Endothelial cell of umbilical vein (primary cell): ENCODE measurements at regions of chr19 and their contacts with region 1.

Region 1: DNA sequence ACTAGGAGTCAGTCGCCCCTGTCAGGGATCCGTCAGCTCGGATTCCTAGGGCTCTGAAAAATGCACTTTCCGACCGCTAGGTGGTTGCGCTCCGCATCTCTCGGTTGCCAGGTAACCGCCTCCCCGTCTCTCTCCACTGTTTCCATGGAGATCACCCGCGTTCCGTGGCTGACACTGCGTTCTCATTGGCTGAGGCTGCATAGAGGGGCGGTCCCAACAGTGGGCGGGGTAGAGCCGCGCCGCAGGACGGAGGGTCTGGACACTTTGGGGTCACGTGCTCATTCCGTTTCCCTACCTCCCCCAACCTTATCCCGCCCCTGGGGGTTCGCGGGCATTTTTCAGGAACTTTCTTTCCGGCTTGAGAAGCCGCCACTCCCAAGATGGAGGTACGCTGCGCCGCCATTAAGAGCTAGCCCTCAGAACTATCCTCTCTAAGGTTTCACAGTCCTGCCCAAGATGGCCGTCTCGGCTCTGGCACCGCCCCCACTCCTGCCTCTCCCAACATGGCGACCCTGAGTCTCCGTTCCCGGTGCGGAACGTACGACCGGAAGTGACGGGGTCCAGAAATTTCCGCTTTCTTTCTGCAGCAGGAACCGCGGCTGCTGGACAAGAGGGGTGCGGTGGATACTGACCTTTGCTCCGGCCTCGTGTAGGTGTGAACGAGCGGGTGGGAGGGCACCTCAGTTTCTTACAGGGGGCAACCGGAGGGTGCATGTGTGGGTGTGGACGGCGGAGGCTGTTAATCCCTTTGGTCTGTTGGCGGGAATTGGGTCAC is at the starts of genes ODAD3 and PRKCSH:
- DNase-seq: peak; percentile 100
- H3K4me3 ChIP-seq: peak within 1 kb of the TSS; percentile 71 to 88 (median 82)
- H3K27ac ChIP-seq: peak within 1 kb of the TSS; percentile 88
- H3K4me1 ChIP-seq: peaks cover 12% of the 10 kb centered on the region
- H3K27me3 ChIP-seq: no peaks in the 10 kb centered on the region
- CTCF ChIP-seq: peak; percentile 86 to 89
- POLR2A ChIP-seq: peak; percentile 83
- total RNA-seq, gene ODAD3: 0.97 TPM in 1 of 2 replicates, not detected in the other
- total RNA-seq, gene PRKCSH: 387 and 425 TPM in 2 replicates

Region 2: GRCh38 chr19:11059511-11060358 is 375.5 kb before region 1 on chr19:
- CTCF ChIA-PET with region 1: no interaction called
- POLR2A ChIA-PET with region 1: no interaction called
- dilution Hi-C with region 1: no loop called
- intact Hi-C with region 1: no loop called
- DNase-seq: no peak
- H3K4me3 ChIP-seq: no peak overlapping the region
- H3K27ac ChIP-seq: no peak overlapping the region
- H3K4me1 ChIP-seq: no peaks in the 10 kb centered on the region
- H3K27me3 ChIP-seq: no peaks in the 10 kb centered on the region
- CTCF ChIP-seq: no peak
- POLR2A ChIP-seq: no peak

Region 3: GRCh38 chr19:11164879-11165406 is 270.3 kb before region 1 on chr19:
- CTCF ChIA-PET with region 1: no interaction called
- POLR2A ChIA-PET with region 1: no interaction called
- dilution Hi-C with region 1: no loop called
- intact Hi-C with region 1: no loop called
- DNase-seq: peak; percentile 51
- H3K4me3 ChIP-seq: no peak overlapping the region
- H3K27ac ChIP-seq: peak overlapping the region; percentile 35
- H3K4me1 ChIP-seq: peaks cover 31% of the 10 kb centered on the region
- H3K27me3 ChIP-seq: no peaks in the 10 kb centered on the region
- CTCF ChIP-seq: no peak
- POLR2A ChIP-seq: no peak

Region 4: GRCh38 chr19:11422163-11423021 is 12.9 kb before region 1 on chr19:
- CTCF ChIA-PET with region 1: interaction called, 19 read pairs
- POLR2A ChIA-PET with region 1: no interaction called
- dilution Hi-C with region 1: no loop called
- intact Hi-C with region 1: no loop called
- DNase-seq: peak; percentile 25
- H3K4me3 ChIP-seq: no peak overlapping the region
- H3K27ac ChIP-seq: no peak overlapping the region
- H3K4me1 ChIP-seq: peaks cover 9% of the 10 kb centered on the region
- H3K27me3 ChIP-seq: peaks cover 36 to 39% of the 10 kb centered on the region in 2 experiments
- CTCF ChIP-seq: no peak
- POLR2A ChIP-seq: no peak

Region 5: DNA sequence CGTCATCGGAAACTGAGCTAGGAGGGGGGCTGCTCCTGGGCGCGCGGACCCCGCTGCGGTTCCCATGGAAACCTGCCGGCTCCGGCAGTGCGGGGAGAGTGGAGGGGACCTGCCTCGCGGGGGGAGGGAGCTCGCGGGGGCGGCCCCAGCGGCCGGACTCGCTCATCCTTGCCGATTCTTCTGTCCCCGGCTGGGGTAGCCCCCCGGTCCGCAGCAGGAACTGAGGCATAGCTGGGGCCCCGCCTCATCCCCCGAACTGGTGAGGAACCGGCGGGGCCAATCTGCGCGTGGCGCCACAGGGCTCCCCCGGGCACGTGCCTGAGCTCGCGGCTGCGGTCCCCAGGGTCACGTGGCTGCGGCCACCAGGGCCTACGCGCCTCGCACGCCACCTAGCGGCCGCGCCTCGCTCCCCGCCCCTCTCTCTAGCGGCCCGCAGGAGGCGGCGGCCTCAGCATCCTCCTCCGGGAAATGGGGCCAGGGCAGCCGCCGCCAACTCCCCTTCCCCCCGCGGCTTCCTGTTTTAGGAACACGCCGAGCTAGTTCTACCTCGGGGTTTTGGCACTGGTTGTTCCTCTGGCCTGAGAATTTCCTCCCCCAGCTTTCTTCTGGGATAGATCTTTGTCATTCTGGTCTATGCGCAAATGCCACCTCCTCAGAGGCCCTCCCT is 47.3 kb after region 1 on chr19:
- CTCF ChIA-PET with region 1: interaction called, 12 read pairs
- POLR2A ChIA-PET with region 1: no interaction called
- dilution Hi-C with region 1: no loop called
- intact Hi-C with region 1: loop called (anchors 1 kb)
- DNase-seq: peak; percentile 78
- H3K4me3 ChIP-seq: peak overlapping the region in 1 of 3 experiments; percentile 27
- H3K27ac ChIP-seq: no peak overlapping the region
- H3K4me1 ChIP-seq: peaks cover 3% of the 10 kb centered on the region
- H3K27me3 ChIP-seq: peaks cover 13 to 25% of the 10 kb centered on the region in 2 experiments
- CTCF ChIP-seq: peak; percentile 94 to 95
- POLR2A ChIP-seq: no peak

Region 6: GRCh38 chr19:11673608-11674041 is 238.4 kb after region 1 on chr19:
- CTCF ChIA-PET with region 1: no interaction called
- POLR2A ChIA-PET with region 1: no interaction called
- dilution Hi-C with region 1: no loop called
- intact Hi-C with region 1: no loop called
- DNase-seq: peak; percentile 81
- H3K4me3 ChIP-seq: peak overlapping the region in 2 of 3 experiments; percentile 36 to 51
- H3K27ac ChIP-seq: no peak overlapping the region
- H3K4me1 ChIP-seq: peaks cover 6% of the 10 kb centered on the region
- H3K27me3 ChIP-seq: no peaks in the 10 kb centered on the region
- CTCF ChIP-seq: peak; percentile 79 to 86
- POLR2A ChIP-seq: no peak